ENCODE measurements at regions of chr12 and their contacts with region 1.

Region 1: GRCh38 chr12:585062-586061 is 77.9 kb downstream of the NINJ2 start:
- DNase-seq: no peak
- H3K4me3 ChIP-seq: no peak overlapping the region
- H3K27ac ChIP-seq: no peak overlapping the region
- H3K4me1 ChIP-seq: no peaks in the 10 kb centered on the region
- H3K27me3 ChIP-seq: no peaks in the 10 kb centered on the region
- CTCF ChIP-seq: no peak
- EP300 ChIP-seq: no peak
- POLR2A ChIP-seq: no peak
- RAD21 ChIP-seq: no peak

Region 2: GRCh38 chr12:569803-570434 is 15.4 kb before region 1 on chr12:
- CTCF ChIA-PET with region 1: interaction called, 10 read pairs
- POLR2A ChIA-PET with region 1: no interaction called
- DNase-seq: peak in 1 of 2 experiments; percentile 95
- H3K4me3 ChIP-seq: peak overlapping the region; percentile 28 to 82 (median 64)
- H3K27ac ChIP-seq: no peak overlapping the region
- H3K4me1 ChIP-seq: peaks cover 0 to 9% (median 6%) of the 10 kb centered on the region in 4 experiments; a peak in 5 of 7 replicates
- H3K27me3 ChIP-seq: peaks cover 0 to 4% (median 3%) of the 10 kb centered on the region in 4 experiments; a peak in 2 of 7 replicates
- CTCF ChIP-seq: peak in 2 of 3 experiments; percentile 86; a peak in 3 of 4 replicates
- EP300 ChIP-seq: no peak
- POLR2A ChIP-seq: no peak
- RAD21 ChIP-seq: peak; percentile 86 to 88

Region 3: DNA sequence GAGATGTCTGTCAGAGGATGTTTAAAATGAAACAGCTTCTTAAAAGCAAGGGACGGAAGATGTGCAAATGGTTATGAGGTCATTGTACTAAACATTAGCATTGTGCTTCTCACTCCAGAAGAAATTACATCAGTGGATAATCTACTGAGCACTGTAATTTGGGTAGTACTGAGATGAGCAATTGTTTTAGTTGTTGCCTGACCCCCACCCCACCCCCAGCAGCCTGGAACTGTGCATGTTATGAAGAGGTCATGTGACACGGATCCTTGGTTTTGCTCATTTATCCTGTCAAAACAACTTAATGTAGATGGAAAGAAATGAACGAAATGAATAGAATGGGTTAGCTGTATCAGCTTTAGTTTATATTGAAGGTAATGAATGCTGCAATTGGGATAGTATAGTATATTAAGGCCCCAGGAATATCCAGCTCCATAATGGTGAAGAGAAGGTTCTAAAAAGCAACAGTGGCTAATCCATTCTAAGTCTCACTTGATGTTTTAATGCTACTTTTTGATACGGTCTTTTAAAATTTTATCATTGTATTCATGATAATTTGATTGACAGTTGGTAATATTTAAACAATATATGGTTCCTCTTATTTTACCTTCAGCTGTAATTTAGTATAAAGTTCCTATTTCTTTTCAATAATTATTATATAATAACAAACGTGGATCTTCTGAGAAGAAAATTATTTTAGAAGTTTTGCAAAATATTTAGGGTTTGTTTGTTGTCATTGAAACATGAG is 225.5 kb after region 1 on chr12:
- CTCF ChIA-PET with region 1: interaction called, 21 read pairs
- POLR2A ChIA-PET with region 1: no interaction called
- DNase-seq: no peak
- H3K4me3 ChIP-seq: no peak overlapping the region
- H3K27ac ChIP-seq: no peak overlapping the region
- H3K4me1 ChIP-seq: 0 out of 7 replicates have a peak, but pooled peaks cover 0 to 3% (median 0%) of the 10 kb centered on the region in 4 experiments
- H3K27me3 ChIP-seq: no peaks in the 10 kb centered on the region
- CTCF ChIP-seq: no peak
- EP300 ChIP-seq: no peak
- POLR2A ChIP-seq: no peak
- RAD21 ChIP-seq: no peak

Measured in H1 (cell line).